Activated B cell treated with CpG ODN at 0.5 μM for 24 hours (primary cell): ENCODE measurements at regions of chr6 and their contacts with region 1.

Region 1: DNA sequence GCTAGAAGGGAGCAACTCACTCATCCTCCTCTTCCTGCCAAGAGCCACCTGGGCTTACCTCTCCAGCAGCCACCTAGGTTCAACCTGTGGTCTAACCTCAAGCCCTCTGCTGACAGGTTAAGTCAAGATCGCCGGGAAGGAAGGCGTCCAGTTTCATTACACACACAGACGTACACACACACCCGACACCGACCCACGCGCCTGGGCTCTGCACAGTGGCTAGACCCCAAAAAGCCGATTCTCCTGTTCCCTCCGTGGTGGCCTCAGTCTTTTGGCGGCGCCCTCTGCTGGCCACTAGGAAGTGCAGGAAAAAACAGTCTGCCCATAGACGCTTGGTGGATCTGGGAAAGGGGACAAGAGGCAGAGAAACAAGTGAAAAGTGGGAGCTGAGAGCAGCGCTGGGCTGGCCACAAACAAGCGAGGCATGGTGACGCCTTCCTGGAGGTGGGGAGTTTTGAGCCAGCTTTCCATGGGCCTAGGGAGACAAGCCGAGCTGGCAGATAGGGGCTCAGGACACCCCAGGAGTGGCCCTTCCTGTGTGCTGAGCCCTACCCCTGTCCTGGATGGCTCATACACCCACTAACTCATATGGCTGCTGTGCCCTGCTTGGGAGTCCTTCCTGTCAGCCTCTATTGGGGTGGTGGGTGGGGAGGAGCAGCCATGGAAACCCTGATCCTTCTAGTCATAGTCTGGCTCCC is 52.7 kb downstream of the MRPL14 start:
- DNase-seq: peak; percentile 56
- ATAC-seq: peak; percentile 60
- H3K4me3 Mint-ChIP-seq: peak overlapping the region; percentile 66
- H3K27ac Mint-ChIP-seq: peak overlapping the region; percentile 7
- H3K4me1 Mint-ChIP-seq: peaks cover 20% of the 10 kb centered on the region
- H3K27me3 Mint-ChIP-seq: peaks cover 30% of the 10 kb centered on the region
- CTCF ChIP-seq: peak; percentile 21

Region 2: GRCh38 chr6:44002593-44003344 is 71.8 kb before region 1 on chr6:
- CTCF ChIA-PET with region 1: interaction called, 3 read pairs
- POLR2A ChIA-PET with region 1: no interaction called
- intact Hi-C with region 1: loop called (anchors 5 kb)
- DNase-seq: peak; percentile 49
- ATAC-seq: peak; percentile 61
- H3K4me3 Mint-ChIP-seq: peak overlapping the region; percentile 76
- H3K27ac Mint-ChIP-seq: no peak overlapping the region
- H3K4me1 Mint-ChIP-seq: peaks cover 20% of the 10 kb centered on the region
- H3K27me3 Mint-ChIP-seq: peaks cover 49% of the 10 kb centered on the region
- CTCF ChIP-seq: no peak